ENCODE measurements at regions of chr17 and their contacts with region 1.

Region 1: GRCh38 chr17:18141210-18141803 is 32.8 kb downstream of the MYO15A start:
- DNase-seq: peak; percentile 61
- H3K4me3 Mint-ChIP-seq: no peak overlapping the region
- H3K27ac Mint-ChIP-seq: no peak overlapping the region
- H3K4me1 Mint-ChIP-seq: peaks cover 4% of the 10 kb centered on the region
- H3K27me3 Mint-ChIP-seq: no peaks in the 10 kb centered on the region

Region 2: DNA sequence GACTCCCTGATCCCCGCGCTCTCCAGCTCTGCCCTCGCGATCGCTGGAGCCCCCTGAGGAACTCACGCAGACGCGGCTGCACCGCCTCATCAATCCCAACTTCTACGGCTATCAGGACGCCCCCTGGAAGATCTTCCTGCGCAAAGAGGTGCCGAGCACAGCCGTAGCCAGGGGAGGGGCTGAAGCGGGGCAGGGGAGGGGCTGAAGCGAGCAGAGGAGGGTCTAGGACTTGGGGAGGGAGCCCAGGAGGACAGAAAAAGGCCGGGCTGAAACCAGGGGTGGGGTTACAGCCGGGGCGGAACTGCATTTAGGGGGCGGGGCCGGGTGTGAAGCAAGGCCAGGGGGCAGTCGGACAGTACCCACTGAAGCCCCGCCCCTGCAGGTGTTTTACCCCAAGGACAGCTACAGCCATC is 12.4 kb after region 1 on chr17:
- CTCF ChIA-PET with region 1: interaction called, 18 read pairs
- POLR2A ChIA-PET with region 1: interaction called, 3 read pairs
- DNase-seq: peak; percentile 53
- H3K4me3 Mint-ChIP-seq: peak overlapping the region; percentile 57
- H3K27ac Mint-ChIP-seq: no peak overlapping the region
- H3K4me1 Mint-ChIP-seq: peaks cover 16% of the 10 kb centered on the region
- H3K27me3 Mint-ChIP-seq: no peaks in the 10 kb centered on the region

Measured in activated CD4-positive, alpha-beta T cell treated with anti-CD3 and anti-CD28 coated beads, Interleukin-2, amount 10 ng/mL, durations not matched to agents 7 days and 5 days (primary cell).